ENCODE measurements at regions of chr1 and their contacts with region 1.

Region 1: GRCh38 chr1:91500756-91501522 is at the start of gene CDC7:
- ATAC-seq: peak; percentile 68 to 90 (median 87)
- H3K4me3 ChIP-seq: peak within 1 kb of the TSS; percentile 62 to 82 (median 71)
- H3K27ac ChIP-seq: peak within 1 kb of the TSS; percentile 69 to 77
- H3K4me1 ChIP-seq: peaks cover 12 to 16% of the 10 kb centered on the region in 2 donors
- total RNA-seq, gene CDC7: 5.9 to 46.8 (median 22.0) TPM

Region 2: DNA sequence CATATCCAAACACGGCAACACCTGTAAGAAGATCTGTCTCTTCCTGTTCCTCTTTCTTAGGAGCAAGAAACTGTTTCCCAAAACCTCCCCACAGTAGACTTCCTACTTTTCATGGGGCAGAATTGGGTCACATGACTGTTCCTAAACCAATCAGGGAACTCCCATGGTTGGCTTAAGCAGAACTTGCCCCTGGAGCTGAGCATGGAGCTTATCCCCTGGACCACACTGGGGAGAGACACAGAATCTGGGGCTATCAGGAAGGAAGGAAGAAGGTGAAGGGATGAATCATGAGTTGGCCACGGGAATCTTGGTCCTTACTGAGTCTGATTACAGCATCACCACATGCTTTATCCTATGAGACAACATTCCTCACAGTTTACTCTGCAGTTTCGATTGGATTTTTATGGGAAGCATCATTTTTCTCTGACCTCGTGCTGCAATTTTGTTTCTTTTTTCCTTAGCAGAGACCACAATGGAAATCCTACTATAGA is 81.5 kb after region 1 on chr1:
- in situ Hi-C with region 1: no loop called
- ATAC-seq: peak in 3 of 8 experiments; percentile 28 to 52 (median 37)
- H3K4me3 ChIP-seq: no peak overlapping the region
- H3K27ac ChIP-seq: no peak overlapping the region
- H3K4me1 ChIP-seq: no peaks in the 10 kb centered on the region

Region 3: DNA sequence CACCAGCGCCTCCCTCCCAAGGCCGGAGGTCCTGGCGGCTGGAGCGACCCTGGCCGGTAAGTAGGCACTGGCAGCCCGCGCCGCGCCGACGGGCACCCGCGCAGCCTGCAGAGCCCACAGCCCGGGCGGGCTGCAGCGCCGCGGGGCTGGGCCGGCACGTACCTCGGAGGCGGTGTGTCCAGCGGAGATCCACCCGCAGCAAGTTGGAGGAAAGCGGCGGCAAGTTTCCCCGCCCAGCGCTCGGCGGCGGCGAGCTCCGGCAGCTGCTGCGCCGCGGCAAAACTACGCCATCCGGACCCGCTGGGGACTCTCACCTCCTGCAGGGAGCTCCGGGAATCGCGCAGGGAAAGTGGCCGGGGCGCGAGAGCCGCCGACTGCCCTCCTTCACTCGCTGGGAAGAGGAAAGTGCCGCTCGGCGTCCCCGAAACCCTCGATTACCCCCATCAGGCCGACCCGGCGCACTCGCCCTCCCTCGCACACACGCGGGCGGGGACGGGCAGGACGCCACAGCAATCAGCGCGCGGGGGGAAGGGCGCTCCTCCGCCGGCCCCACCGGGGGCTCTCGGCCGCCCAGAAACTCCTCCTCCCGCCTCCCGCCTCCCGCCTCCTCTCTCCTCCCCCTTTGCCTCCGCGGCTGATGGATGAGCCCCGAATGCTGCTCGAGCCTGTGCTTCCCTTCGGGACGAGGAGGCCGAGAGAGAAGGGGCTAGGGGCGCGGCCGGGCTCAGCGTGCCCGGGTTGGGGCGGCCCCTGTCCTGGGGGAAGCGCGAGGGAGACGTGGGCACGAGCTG is 385.0 kb after region 1 on chr1 and contains the start of gene TGFBR3:
- in situ Hi-C with region 1: loop called in 2 of 9 experiments (anchors 25 kb)
- ATAC-seq: peak; percentile 71 to 93 (median 90)
- H3K4me3 ChIP-seq: peak within 1 kb of the TSS; percentile 53 to 87 (median 61)
- H3K27ac ChIP-seq: peak within 1 kb of the TSS; percentile 11 to 39
- H3K4me1 ChIP-seq: peaks cover 0 to 4% of the 10 kb centered on the region in 2 donors
- total RNA-seq, gene TGFBR3: 3.5 to 57.8 (median 9.0) TPM

Region 4: GRCh38 chr1:91924146-91924545 is 423.2 kb after region 1 on chr1:
- in situ Hi-C with region 1: loop called in 4 of 9 experiments (anchors 25 kb)
- ATAC-seq: peak in 3 of 8 experiments; percentile 33 to 90 (median 87)
- H3K4me3 ChIP-seq: no peak overlapping the region
- H3K27ac ChIP-seq: no peak overlapping the region
- H3K4me1 ChIP-seq: no peaks in the 10 kb centered on the region

Region 5: GRCh38 chr1:91929250-91929649 is 428.3 kb after region 1 on chr1:
- in situ Hi-C with region 1: loop called in 4 of 9 experiments (anchors 25 kb)
- ATAC-seq: peak in 3 of 8 experiments; percentile 81 to 92 (median 82)
- H3K4me3 ChIP-seq: no peak overlapping the region
- H3K27ac ChIP-seq: no peak overlapping the region
- H3K4me1 ChIP-seq: no peaks in the 10 kb centered on the region

Measured in motor neuron (in vitro differentiated cells).